ENCODE measurements at regions of chr2 and their contacts with region 1.

Region 1: GRCh38 chr2:226791487-226792081 is 8.0 kb downstream of the IRS1 start:
- DNase-seq: peak; percentile 91
- H3K4me3 ChIP-seq: peak overlapping the region; percentile 59 to 60
- H3K27ac ChIP-seq: peak overlapping the region; percentile 92 to 93
- H3K4me1 ChIP-seq: no peaks in the 10 kb centered on the region
- H3K27me3 ChIP-seq: no peaks in the 10 kb centered on the region
- CTCF ChIP-seq: peak; percentile 45 to 90 (median 68)
- POLR2A ChIP-seq: peak; percentile 55

Region 2: GRCh38 chr2:226011716-226012450 is 779.7 kb before region 1 on chr2:
- intact Hi-C with region 1: no loop called
- DNase-seq: no peak
- H3K4me3 ChIP-seq: no peak overlapping the region
- H3K27ac ChIP-seq: no peak overlapping the region
- H3K4me1 ChIP-seq: no peaks in the 10 kb centered on the region
- H3K27me3 ChIP-seq: no peaks in the 10 kb centered on the region
- CTCF ChIP-seq: no peak
- POLR2A ChIP-seq: no peak

Region 3: GRCh38 chr2:226215902-226216503 is 575.6 kb before region 1 on chr2:
- intact Hi-C with region 1: loop called (anchors 10 kb)
- DNase-seq: peak; percentile 57
- H3K4me3 ChIP-seq: no peak overlapping the region
- H3K27ac ChIP-seq: no peak overlapping the region
- H3K4me1 ChIP-seq: peaks cover 2% of the 10 kb centered on the region
- H3K27me3 ChIP-seq: no peaks in the 10 kb centered on the region
- CTCF ChIP-seq: peak in 3 of 4 experiments; percentile 47 to 62 (median 60)
- POLR2A ChIP-seq: no peak

Region 4: GRCh38 chr2:226609366-226609765 is 182.2 kb before region 1 on chr2:
- intact Hi-C with region 1: no loop called
- DNase-seq: no peak
- H3K4me3 ChIP-seq: no peak overlapping the region
- H3K27ac ChIP-seq: no peak overlapping the region
- H3K4me1 ChIP-seq: no peaks in the 10 kb centered on the region
- H3K27me3 ChIP-seq: no peaks in the 10 kb centered on the region
- CTCF ChIP-seq: no peak
- POLR2A ChIP-seq: no peak

Region 5: DNA sequence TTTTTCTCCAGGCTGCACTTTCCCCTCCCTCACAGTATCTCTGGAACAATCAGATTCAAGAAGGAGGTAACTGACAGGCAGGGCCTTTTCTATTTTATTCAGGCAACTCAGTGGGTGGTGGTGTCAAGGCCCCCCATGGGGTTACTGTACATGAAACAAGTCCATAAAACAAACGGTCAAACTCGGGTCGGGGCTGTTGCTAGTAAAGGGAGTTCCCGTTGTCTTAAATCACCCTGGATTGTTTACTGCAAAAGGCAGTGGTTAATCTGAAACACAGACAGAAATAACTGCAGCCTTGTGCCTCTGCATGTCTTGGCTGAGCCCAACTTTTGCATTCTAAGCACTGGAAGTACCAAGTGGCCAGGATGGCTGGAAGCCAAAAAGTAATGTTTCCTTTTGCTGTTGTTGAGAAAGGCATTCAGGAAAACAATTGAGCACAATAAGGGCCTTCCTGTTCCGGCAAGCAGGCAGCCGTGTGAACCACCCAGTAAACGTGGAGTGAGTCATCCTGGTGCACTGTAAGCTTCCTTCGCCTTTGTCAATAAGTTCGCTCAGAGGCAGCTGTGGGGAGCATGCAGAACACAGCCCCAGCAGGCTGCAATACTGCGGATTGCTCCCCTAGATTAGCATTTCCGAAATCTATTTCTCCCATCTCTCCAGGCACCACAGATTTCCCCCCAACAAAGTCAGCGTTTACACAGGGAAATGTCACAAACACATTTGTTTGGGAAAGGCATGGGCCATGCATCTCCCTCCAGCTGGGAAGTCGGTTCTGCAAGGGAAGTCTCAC is 141.5 kb before region 1 on chr2:
- intact Hi-C with region 1: loop called (anchors 10 kb)
- DNase-seq: peak; percentile 97
- H3K4me3 ChIP-seq: no peak overlapping the region
- H3K27ac ChIP-seq: peak overlapping the region; percentile 68 to 75
- H3K4me1 ChIP-seq: peaks cover 3% of the 10 kb centered on the region
- H3K27me3 ChIP-seq: no peaks in the 10 kb centered on the region
- CTCF ChIP-seq: peak in 2 of 4 experiments; percentile 2 to 3
- POLR2A ChIP-seq: no peak